Naive thymus-derived CD8-positive, alpha-beta T cell (primary cell): ENCODE measurements at regions of chr6 and their contacts with region 1.

Region 1: GRCh38 chr6:52361945-52362442 is at the start of gene PAQR8:
- DNase-seq: peak; percentile 75 to 90 (median 83)
- ATAC-seq: peak; percentile 84
- H3K4me3 Mint-ChIP-seq: peak within 1 kb of the TSS; percentile 97 to 99 (median 98)
- H3K27ac Mint-ChIP-seq: peak within 1 kb of the TSS; percentile 94 to 99 (median 98)
- H3K4me1 Mint-ChIP-seq: peaks cover 26 to 54% (median 50%) of the 10 kb centered on the region in 4 donors
- H3K27me3 Mint-ChIP-seq: no peaks in the 10 kb centered on the region
- polyA plus RNA-seq, gene PAQR8: 14.3 to 35.0 (median 30.6) TPM

Region 2: GRCh38 chr6:52284460-52285176 is 77.4 kb before region 1 on chr6 and contains the start of gene MCM3:
- POLR2A ChIA-PET with region 1: interaction called, 51 read pairs
- DNase-seq: peak; percentile 79 to 98 (median 95)
- ATAC-seq: peak; percentile 94
- H3K4me3 Mint-ChIP-seq: peak within 1 kb of the TSS in 6 of 10 donors; percentile 27 to 72 (median 62)
- H3K27ac Mint-ChIP-seq: peak within 1 kb of the TSS in 4 of 10 donors; percentile 19 to 65 (median 46)
- H3K4me1 Mint-ChIP-seq: peaks cover 12 to 46% (median 35%) of the 10 kb centered on the region in 4 donors
- H3K27me3 Mint-ChIP-seq: no peaks in the 10 kb centered on the region
- polyA plus RNA-seq, gene MCM3: 45.5 to 63.5 (median 57.7) TPM

Region 3: DNA sequence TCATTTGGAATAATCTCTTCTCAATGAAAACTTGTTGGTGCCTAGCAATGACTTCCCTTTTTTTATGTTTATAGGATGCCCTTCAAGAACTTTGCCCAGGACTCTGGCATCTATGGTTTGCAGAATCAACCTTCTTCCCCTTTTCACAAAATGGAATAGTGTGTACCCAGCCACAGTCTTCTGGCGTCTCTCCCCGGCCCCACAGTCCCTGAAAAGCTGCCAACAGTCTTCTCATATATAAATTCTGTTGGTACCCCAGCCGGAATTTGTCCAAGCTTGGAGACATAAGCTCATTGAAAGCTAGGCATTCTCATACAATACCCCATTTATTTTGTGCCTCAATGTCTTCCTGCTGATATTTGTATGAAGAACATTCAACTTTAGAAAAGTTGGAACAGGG is 51.1 kb before region 1 on chr6:
- POLR2A ChIA-PET with region 1: interaction called, 52 read pairs
- DNase-seq: no peak
- ATAC-seq: no peak
- H3K4me3 Mint-ChIP-seq: peak overlapping the region in 2 of 10 donors; percentile 30 to 40
- H3K27ac Mint-ChIP-seq: peak overlapping the region in 8 of 10 donors; percentile 16 to 82 (median 55)
- H3K4me1 Mint-ChIP-seq: peaks cover 44 to 74% (median 66%) of the 10 kb centered on the region in 4 donors
- H3K27me3 Mint-ChIP-seq: no peaks in the 10 kb centered on the region

Region 4: DNA sequence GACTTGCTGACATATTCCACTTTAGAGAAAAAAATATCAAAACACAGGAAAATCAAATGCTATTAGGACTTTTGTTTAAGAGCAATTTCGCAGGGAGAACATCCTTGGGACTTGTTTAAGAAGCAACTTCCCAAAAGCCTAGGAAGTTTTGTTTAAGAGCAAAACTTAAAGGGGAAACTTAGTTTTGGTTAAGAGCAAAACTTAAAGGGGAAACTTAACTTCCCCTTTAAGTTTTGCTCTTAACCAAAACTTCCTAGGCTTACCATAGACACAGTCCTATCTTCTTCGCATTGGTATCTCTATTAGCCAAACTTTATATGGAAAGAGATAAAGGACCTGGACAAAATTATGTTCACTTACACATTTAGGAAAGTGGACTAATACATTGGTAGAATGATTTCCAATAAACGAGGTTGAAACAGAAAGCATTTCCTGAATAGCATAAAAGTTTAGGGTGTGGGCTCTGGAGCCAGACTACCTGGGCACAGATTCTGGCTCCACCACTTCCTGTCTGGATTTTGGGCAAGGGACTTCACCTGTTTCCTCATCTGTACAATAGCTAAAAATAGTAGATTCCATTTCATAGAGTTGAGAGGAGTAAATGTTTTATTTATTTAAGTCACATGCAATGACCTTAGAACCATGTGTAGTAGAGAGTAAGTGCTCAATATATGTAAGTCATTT is 15.7 kb after region 1 on chr6:
- POLR2A ChIA-PET with region 1: interaction called, 18 read pairs
- DNase-seq: no peak
- ATAC-seq: peak; percentile 36 to 50
- H3K4me3 Mint-ChIP-seq: peak overlapping the region; percentile 20 to 83 (median 68)
- H3K27ac Mint-ChIP-seq: peak overlapping the region; percentile 66 to 97 (median 90)
- H3K4me1 Mint-ChIP-seq: peaks cover 40 to 93% (median 73%) of the 10 kb centered on the region in 4 donors
- H3K27me3 Mint-ChIP-seq: no peaks in the 10 kb centered on the region

Region 5: GRCh38 chr6:52399511-52400312 is 37.7 kb after region 1 on chr6:
- POLR2A ChIA-PET with region 1: interaction called, 63 read pairs
- DNase-seq: peak in 5 of 10 donors; percentile 39 to 64 (median 54)
- ATAC-seq: peak; percentile 24 to 27
- H3K4me3 Mint-ChIP-seq: peak overlapping the region; percentile 42 to 83 (median 68)
- H3K27ac Mint-ChIP-seq: peak overlapping the region; percentile 93 to 100 (median 96)
- H3K4me1 Mint-ChIP-seq: peaks cover 49 to 86% (median 72%) of the 10 kb centered on the region in 4 donors
- H3K27me3 Mint-ChIP-seq: no peaks in the 10 kb centered on the region